ENCODE measurements at regions of chr18 and their contacts with region 1.

Region 1: GRCh38 chr18:7272311-7273049 is 41.6 kb downstream of the LRRC30 start:
- DNase-seq: peak; percentile 83
- H3K4me3 Mint-ChIP-seq: no peak overlapping the region
- H3K27ac Mint-ChIP-seq: peak overlapping the region; percentile 80
- H3K4me1 Mint-ChIP-seq: peaks cover 14% of the 10 kb centered on the region
- H3K27me3 Mint-ChIP-seq: no peaks in the 10 kb centered on the region
- CTCF ChIP-seq: peak; percentile 61

Region 2: GRCh38 chr18:6881034-6881820 is 391.3 kb before region 1 on chr18:
- CTCF ChIA-PET with region 1: no interaction called
- POLR2A ChIA-PET with region 1: no interaction called
- intact Hi-C with region 1: no loop called
- DNase-seq: no peak
- H3K4me3 Mint-ChIP-seq: no peak overlapping the region
- H3K27ac Mint-ChIP-seq: no peak overlapping the region
- H3K4me1 Mint-ChIP-seq: peaks cover 10% of the 10 kb centered on the region
- H3K27me3 Mint-ChIP-seq: no peaks in the 10 kb centered on the region
- CTCF ChIP-seq: no peak

Region 3: GRCh38 chr18:7207366-7207915 is 65.0 kb before region 1 on chr18:
- CTCF ChIA-PET with region 1: no interaction called
- POLR2A ChIA-PET with region 1: no interaction called
- intact Hi-C with region 1: no loop called
- DNase-seq: no peak
- H3K4me3 Mint-ChIP-seq: no peak overlapping the region
- H3K27ac Mint-ChIP-seq: no peak overlapping the region
- H3K4me1 Mint-ChIP-seq: no peaks in the 10 kb centered on the region
- H3K27me3 Mint-ChIP-seq: peaks cover 5% of the 10 kb centered on the region
- CTCF ChIP-seq: no peak

Region 4: GRCh38 chr18:7291046-7291445 is 18.6 kb after region 1 on chr18:
- CTCF ChIA-PET with region 1: interaction called, 12 read pairs
- POLR2A ChIA-PET with region 1: no interaction called
- intact Hi-C with region 1: no loop called
- DNase-seq: no peak
- H3K4me3 Mint-ChIP-seq: no peak overlapping the region
- H3K27ac Mint-ChIP-seq: no peak overlapping the region
- H3K4me1 Mint-ChIP-seq: no peaks in the 10 kb centered on the region
- H3K27me3 Mint-ChIP-seq: no peaks in the 10 kb centered on the region
- CTCF ChIP-seq: no peak

Region 5: GRCh38 chr18:7452331-7452730 is 179.9 kb after region 1 on chr18:
- CTCF ChIA-PET with region 1: interaction called, 9 read pairs
- POLR2A ChIA-PET with region 1: interaction called, 3 read pairs
- intact Hi-C with region 1: loop called (anchors 2 kb)
- DNase-seq: peak; percentile 72
- H3K4me3 Mint-ChIP-seq: no peak overlapping the region
- H3K27ac Mint-ChIP-seq: no peak overlapping the region
- H3K4me1 Mint-ChIP-seq: no peaks in the 10 kb centered on the region
- H3K27me3 Mint-ChIP-seq: no peaks in the 10 kb centered on the region
- CTCF ChIP-seq: peak; percentile 53

Region 6: DNA sequence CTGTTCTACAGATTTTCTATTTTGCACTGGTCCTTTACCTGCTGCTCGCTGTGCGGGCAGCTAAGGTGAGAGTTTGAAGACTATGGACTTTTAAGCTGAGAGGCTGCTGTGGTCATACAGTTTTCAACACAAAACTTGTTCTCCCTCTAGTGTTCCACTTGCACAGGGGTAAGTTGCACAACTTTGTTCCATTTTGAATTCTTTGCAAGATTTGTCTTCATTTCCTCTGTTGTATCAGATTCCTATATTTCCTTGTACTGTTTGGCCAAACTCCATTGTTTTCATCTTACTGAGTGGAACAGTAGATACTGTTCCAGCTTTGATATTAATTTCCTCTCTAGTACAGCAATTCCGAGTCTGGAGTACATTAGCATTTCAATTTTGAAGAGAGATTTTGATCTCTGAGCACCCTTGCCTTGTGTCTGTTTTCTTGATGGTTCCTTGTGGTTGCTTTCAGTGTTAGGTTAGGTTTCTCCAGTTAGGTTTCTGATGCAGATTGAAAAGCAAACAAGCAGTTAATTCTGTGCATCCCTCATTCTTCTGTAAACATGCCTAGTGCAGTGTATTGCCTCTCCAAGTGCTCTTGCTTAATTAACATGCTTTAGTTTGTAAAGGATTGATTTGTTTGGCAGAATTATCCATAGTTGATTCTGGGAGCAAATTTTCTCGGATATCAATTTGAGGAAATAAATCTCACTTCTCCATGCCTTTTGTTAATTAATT is 483.4 kb after region 1 on chr18:
- CTCF ChIA-PET with region 1: interaction called, 6 read pairs
- POLR2A ChIA-PET with region 1: no interaction called
- intact Hi-C with region 1: loop called (anchors 10 kb)
- DNase-seq: peak; percentile 23
- H3K4me3 Mint-ChIP-seq: no peak overlapping the region
- H3K27ac Mint-ChIP-seq: no peak overlapping the region
- H3K4me1 Mint-ChIP-seq: peaks cover 22% of the 10 kb centered on the region
- H3K27me3 Mint-ChIP-seq: no peaks in the 10 kb centered on the region
- CTCF ChIP-seq: no peak

Region 7: GRCh38 chr18:8084160-8084559 is 811.7 kb after region 1 on chr18:
- CTCF ChIA-PET with region 1: no interaction called
- POLR2A ChIA-PET with region 1: no interaction called
- intact Hi-C with region 1: loop called (anchors 10 kb)
- DNase-seq: peak; percentile 71
- H3K4me3 Mint-ChIP-seq: no peak overlapping the region
- H3K27ac Mint-ChIP-seq: no peak overlapping the region
- H3K4me1 Mint-ChIP-seq: no peaks in the 10 kb centered on the region
- H3K27me3 Mint-ChIP-seq: no peaks in the 10 kb centered on the region
- CTCF ChIP-seq: peak; percentile 59

Region 8: DNA sequence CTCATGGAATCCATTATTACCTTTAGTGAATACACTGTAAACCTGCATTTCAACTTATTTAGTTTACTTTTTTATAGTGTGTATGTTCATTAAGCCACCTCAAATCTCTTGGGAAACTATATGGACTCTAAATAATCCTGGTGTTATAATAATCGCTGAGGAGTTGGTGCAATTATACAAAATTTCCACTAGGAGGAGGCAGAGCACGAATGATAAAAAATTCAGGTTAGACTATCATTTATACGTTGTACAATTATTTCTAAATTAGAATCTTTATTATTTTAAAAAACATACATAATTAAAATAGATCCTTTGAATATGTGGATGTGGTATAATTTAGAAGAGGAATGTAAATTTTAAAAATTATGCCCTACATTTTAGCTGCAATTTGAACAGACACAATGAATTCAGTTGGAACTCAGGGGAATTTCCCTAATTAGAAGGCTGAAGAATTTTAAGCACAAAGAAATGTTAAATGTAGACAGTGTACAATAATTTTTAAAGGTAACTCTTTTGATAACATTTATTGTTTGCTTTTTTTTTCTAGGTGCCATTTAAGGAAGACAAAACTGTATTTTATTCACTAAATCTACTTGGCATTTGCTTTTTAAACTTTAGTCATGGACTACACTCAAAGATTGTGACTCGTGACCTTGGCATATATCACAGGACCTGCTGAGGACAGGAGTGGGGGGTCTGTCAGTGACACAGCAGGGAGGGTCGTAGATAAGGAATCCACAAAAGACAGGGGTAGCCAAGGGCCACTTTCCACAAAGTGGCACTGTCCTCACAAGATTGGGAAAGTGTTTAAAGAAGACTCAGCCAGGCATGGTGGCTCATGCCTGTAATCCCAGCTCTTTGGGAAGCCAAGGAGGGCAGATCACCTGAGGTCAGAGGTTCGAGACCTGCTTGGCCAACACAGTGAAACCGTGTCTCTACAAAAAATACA is 1382.3 kb after region 1 on chr18:
- CTCF ChIA-PET with region 1: no interaction called
- POLR2A ChIA-PET with region 1: no interaction called
- intact Hi-C with region 1: loop called (anchors 5 kb)
- DNase-seq: peak; percentile 40
- H3K4me3 Mint-ChIP-seq: no peak overlapping the region
- H3K27ac Mint-ChIP-seq: no peak overlapping the region
- H3K4me1 Mint-ChIP-seq: peaks cover 10% of the 10 kb centered on the region
- H3K27me3 Mint-ChIP-seq: peaks cover 14% of the 10 kb centered on the region
- CTCF ChIP-seq: peak; percentile 71